Natural killer cell (primary cell): ENCODE measurements at regions of chr17 and their contacts with region 1.

Region 1: GRCh38 chr17:78250891-78251794 is 19.7 kb downstream of the TMEM235 start:
- DNase-seq: peak; percentile 77 to 91
- ATAC-seq: peak; percentile 80 to 91 (median 81)
- H3K4me3 ChIP-seq: no peak overlapping the region
- H3K4me3 Mint-ChIP-seq: peak overlapping the region; percentile 53
- H3K27ac ChIP-seq: no peak overlapping the region
- H3K27ac Mint-ChIP-seq: no peak overlapping the region
- H3K4me1 ChIP-seq: peaks cover 43% of the 10 kb centered on the region
- H3K4me1 Mint-ChIP-seq: peaks cover 18 to 30% of the 10 kb centered on the region in 2 donors
- H3K27me3 ChIP-seq: no peaks in the 10 kb centered on the region
- H3K27me3 Mint-ChIP-seq: no peaks in the 10 kb centered on the region
- CTCF ChIP-seq: peak; percentile 100

Region 2: GRCh38 chr17:78082988-78083387 is 168.2 kb before region 1 on chr17:
- intact Hi-C with region 1: loop called (anchors 1 kb)
- DNase-seq: no peak
- ATAC-seq: no peak
- H3K4me3 ChIP-seq: no peak overlapping the region
- H3K4me3 Mint-ChIP-seq: no peak overlapping the region
- H3K27ac ChIP-seq: no peak overlapping the region
- H3K27ac Mint-ChIP-seq: no peak overlapping the region
- H3K4me1 ChIP-seq: no peaks in the 10 kb centered on the region
- H3K4me1 Mint-ChIP-seq: no peaks in the 10 kb centered on the region
- H3K27me3 ChIP-seq: no peaks in the 10 kb centered on the region
- H3K27me3 Mint-ChIP-seq: no peaks in the 10 kb centered on the region
- CTCF ChIP-seq: no peak

Region 3: GRCh38 chr17:78112518-78113226 is 138.5 kb before region 1 on chr17:
- intact Hi-C with region 1: loop called (anchors 1 kb)
- DNase-seq: peak; percentile 83 to 85
- ATAC-seq: peak; percentile 66 to 82 (median 71)
- H3K4me3 ChIP-seq: no peak overlapping the region
- H3K4me3 Mint-ChIP-seq: peak overlapping the region; percentile 72
- H3K27ac ChIP-seq: peak overlapping the region; percentile 73
- H3K27ac Mint-ChIP-seq: peak overlapping the region; percentile 79 to 91
- H3K4me1 ChIP-seq: peaks cover 40% of the 10 kb centered on the region
- H3K4me1 Mint-ChIP-seq: peaks cover 35 to 49% of the 10 kb centered on the region in 2 donors
- H3K27me3 ChIP-seq: no peaks in the 10 kb centered on the region
- H3K27me3 Mint-ChIP-seq: no peaks in the 10 kb centered on the region
- CTCF ChIP-seq: peak; percentile 98

Region 4: GRCh38 chr17:78204387-78205123 is 46.6 kb before region 1 on chr17:
- intact Hi-C with region 1: no loop called
- DNase-seq: no peak
- ATAC-seq: no peak
- H3K4me3 ChIP-seq: no peak overlapping the region
- H3K4me3 Mint-ChIP-seq: no peak overlapping the region
- H3K27ac ChIP-seq: no peak overlapping the region
- H3K27ac Mint-ChIP-seq: no peak overlapping the region
- H3K4me1 ChIP-seq: no peaks in the 10 kb centered on the region
- H3K4me1 Mint-ChIP-seq: no peaks in the 10 kb centered on the region
- H3K27me3 ChIP-seq: no peaks in the 10 kb centered on the region
- H3K27me3 Mint-ChIP-seq: no peaks in the 10 kb centered on the region
- CTCF ChIP-seq: no peak

Region 5: GRCh38 chr17:78214706-78215061 is 36.5 kb before region 1 on chr17:
- intact Hi-C with region 1: loop called (anchors 1 kb)
- DNase-seq: no peak
- ATAC-seq: no peak
- H3K4me3 ChIP-seq: no peak overlapping the region
- H3K4me3 Mint-ChIP-seq: peak overlapping the region; percentile 76
- H3K27ac ChIP-seq: no peak overlapping the region
- H3K27ac Mint-ChIP-seq: no peak overlapping the region
- H3K4me1 ChIP-seq: peaks cover 9% of the 10 kb centered on the region
- H3K4me1 Mint-ChIP-seq: peaks cover 0 to 9% of the 10 kb centered on the region in 2 donors
- H3K27me3 ChIP-seq: no peaks in the 10 kb centered on the region
- H3K27me3 Mint-ChIP-seq: no peaks in the 10 kb centered on the region
- CTCF ChIP-seq: no peak